BJ (cell line): ENCODE measurements at regions of chr15 and their contacts with region 1.

Region 1: DNA sequence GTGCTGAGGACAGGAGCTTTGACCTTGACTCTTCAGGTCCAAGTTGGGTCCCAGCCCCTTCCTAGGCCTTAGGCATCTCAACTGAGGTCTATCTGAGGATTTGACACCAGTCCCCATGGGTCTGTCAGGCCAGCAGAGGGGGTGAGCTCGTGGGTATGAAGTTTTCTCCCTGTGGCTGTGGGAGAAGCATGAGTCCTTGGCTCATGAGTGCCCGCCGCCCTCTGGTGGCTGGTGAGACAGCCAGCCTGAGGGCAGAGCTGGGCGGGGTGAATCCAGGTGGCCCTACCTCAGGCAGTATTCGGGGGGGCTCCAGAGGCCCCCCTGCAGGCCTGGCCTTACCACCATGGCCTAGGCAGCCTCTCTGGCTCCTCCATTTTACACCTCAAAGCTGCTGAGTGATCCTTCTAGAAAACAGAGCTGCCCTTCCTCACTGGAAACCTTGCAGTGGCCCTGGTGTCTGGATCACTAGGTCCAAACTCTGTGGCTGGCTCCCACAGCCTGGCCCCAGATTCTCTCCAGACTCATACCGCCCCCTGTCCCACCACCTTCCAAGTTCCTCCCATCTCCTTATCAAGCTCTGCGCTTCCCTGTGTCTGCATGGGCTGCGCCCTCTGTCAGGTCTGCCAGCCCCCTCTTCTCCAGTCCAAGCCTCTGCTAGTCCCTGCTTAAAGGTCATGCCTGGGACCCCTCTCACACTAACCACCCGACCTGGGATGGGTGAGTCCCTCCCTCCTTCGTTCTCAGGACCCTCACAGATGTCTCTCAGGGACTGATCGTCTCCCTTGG is 16.1 kb downstream of the SH2D7 start:
- DNase-seq: no peak
- H3K4me3 ChIP-seq: no peak overlapping the region
- H3K27me3 ChIP-seq: no peaks in the 10 kb centered on the region
- CTCF ChIP-seq: peak; percentile 97

Region 2: GRCh38 chr15:77959432-77959879 is 149.0 kb before region 1 on chr15:
- CTCF ChIA-PET with region 1: interaction called, 282 read pairs
- POLR2A ChIA-PET with region 1: no interaction called
- DNase-seq: no peak
- H3K4me3 ChIP-seq: 0 out of 2 replicates have a peak overlapping the region, but pooled peaks have one; percentile 2
- H3K27me3 ChIP-seq: peaks cover 7% of the 10 kb centered on the region
- CTCF ChIP-seq: peak; percentile 94

Region 3: DNA sequence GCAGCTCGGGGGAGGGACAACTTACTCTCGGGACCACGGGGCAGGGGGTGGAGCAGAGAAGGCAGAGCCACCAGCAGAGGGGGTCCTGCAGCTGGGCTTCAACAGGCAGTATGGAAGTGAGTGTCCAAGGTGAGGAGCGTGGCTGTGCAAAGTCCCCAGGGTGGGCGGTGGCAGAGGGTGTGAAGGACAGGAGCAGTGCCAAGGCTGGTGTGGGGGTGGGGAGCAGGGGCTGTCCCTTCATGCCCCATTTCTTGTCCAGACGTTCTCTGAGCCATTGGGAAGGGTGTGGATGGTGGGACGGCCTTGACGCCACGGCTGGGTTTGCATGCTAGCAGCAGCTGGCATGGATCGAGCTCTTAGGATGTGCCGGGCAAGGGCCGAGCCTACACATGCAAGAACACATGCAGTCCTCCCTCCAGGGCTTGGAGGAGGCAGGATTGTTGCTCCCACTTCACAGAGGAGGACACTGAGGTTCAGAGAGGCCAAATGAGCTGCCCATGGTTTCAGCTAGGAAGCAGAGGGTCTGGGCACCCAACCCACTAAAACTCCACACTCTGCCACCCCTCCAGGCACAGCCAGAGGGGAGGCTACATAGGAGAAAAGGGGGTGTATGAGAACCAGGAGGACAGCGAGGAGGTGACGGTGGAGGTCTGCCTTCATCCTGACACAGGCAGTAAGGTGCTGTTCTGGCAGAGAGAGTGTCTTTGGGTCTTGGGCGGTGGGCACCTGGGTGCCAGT is 124.6 kb before region 1 on chr15:
- CTCF ChIA-PET with region 1: interaction called, 11 read pairs
- POLR2A ChIA-PET with region 1: no interaction called
- DNase-seq: no peak
- H3K4me3 ChIP-seq: no peak overlapping the region
- H3K27me3 ChIP-seq: no peaks in the 10 kb centered on the region
- CTCF ChIP-seq: peak; percentile 23; the same call in 1 of the 2 replicates

Region 4: GRCh38 chr15:78000091-78000926 is 108.2 kb before region 1 on chr15:
- CTCF ChIA-PET with region 1: interaction called, 34 read pairs
- POLR2A ChIA-PET with region 1: no interaction called
- DNase-seq: no peak
- H3K4me3 ChIP-seq: no peak overlapping the region
- H3K27me3 ChIP-seq: no peaks in the 10 kb centered on the region
- CTCF ChIP-seq: peak; percentile 56

Region 5: DNA sequence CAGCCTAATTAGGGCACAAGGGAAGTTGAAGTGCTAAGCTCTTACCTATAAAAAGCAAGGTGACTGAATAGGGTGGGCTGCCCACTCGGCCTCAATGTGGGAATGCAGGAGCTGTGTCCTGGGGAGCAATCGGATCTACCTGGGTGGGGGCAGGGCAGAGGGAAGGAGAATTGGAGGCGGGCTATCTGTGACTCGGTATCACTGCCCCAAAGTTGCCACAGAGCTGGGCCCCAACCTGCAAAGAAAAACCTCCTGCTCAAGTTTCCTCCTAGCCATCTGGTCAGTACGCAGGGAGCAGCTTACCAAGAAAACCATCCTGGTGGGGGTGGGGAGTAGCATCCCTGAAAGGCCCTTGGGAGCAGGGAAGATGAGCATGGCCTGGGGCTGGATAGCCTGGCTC is 12.0 kb after region 1 on chr15:
- CTCF ChIA-PET with region 1: interaction called, 17 read pairs
- POLR2A ChIA-PET with region 1: no interaction called
- DNase-seq: no peak
- H3K4me3 ChIP-seq: no peak overlapping the region
- H3K27me3 ChIP-seq: no peaks in the 10 kb centered on the region
- CTCF ChIP-seq: no peak

Region 6: GRCh38 chr15:78195735-78196201 is 87.3 kb after region 1 on chr15:
- CTCF ChIA-PET with region 1: interaction called, 24 read pairs
- POLR2A ChIA-PET with region 1: no interaction called
- DNase-seq: no peak
- H3K4me3 ChIP-seq: no peak overlapping the region
- H3K27me3 ChIP-seq: no peaks in the 10 kb centered on the region; the same call in 1 of the 2 replicates
- CTCF ChIP-seq: peak; percentile 68

Region 7: GRCh38 chr15:78223396-78224022 is 115.0 kb after region 1 on chr15:
- CTCF ChIA-PET with region 1: no interaction called
- POLR2A ChIA-PET with region 1: no interaction called
- DNase-seq: no peak
- H3K4me3 ChIP-seq: no peak overlapping the region
- H3K27me3 ChIP-seq: no peaks in the 10 kb centered on the region; the same call in 1 of the 2 replicates
- CTCF ChIP-seq: no peak